Mucosa of descending colon (tissue), 3 donors: ENCODE measurements at regions of chr2 and their contacts with region 1.

Region 1: GRCh38 chr2:109128048-109128465 is 948 bp upstream of the SH3RF3 start:
- DNase-seq: peak; percentile 61 to 75 (median 74)
- ATAC-seq: peak; percentile 77
- H3K4me3 ChIP-seq: no peak overlapping the region
- H3K4me1 ChIP-seq: peaks cover 15% of the 10 kb centered on the region
- CTCF ChIP-seq: peak; percentile 74

Region 2: DNA sequence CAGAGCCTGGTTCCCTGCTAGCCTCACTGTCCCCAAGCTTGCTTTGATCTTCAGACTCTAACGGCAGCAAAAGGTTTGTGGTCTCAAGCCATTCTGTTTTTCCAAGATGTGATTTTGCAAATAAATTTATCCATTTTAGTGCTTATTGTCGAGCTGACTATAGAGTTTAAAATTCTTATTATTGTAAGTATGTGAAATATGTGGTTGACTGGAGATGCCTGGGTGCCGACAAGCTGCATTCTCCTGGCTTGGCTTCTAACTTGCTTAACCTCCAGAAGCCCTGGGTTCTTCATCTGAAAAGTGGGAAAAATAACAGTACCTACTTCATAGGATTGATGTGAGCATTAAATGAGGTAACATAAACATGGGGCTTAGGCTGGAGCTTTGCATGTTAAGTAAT is 129.1 kb before region 1 on chr2:
- intact Hi-C with region 1: no loop called
- DNase-seq: no peak
- ATAC-seq: no peak
- H3K4me3 ChIP-seq: no peak overlapping the region
- H3K4me1 ChIP-seq: no peaks in the 10 kb centered on the region
- CTCF ChIP-seq: no peak

Region 3: DNA sequence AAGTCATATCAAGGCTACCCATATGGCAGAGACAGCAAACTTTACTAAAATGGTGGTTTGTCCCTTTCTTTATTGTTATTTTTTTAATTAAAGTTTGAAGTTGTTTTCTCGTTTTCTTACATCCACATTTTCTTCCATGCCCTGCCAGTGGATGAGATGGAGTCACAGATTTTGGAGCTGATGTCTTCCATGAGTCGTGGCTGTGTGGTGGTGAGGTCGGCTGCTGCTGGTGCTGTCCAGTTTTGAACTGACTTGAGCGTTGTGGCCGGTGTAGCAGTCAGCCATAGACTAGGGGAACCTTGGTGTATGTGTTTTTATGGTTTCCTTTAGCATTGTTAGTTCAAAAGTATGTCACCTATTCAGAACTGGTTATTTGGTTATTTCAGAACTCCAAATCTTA is 183.7 kb after region 1 on chr2:
- intact Hi-C with region 1: no loop called
- DNase-seq: no peak
- ATAC-seq: no peak
- H3K4me3 ChIP-seq: no peak overlapping the region
- H3K4me1 ChIP-seq: no peaks in the 10 kb centered on the region
- CTCF ChIP-seq: no peak

Region 4: GRCh38 chr2:109322111-109322510 is 194.1 kb after region 1 on chr2:
- intact Hi-C with region 1: loop called in 1 of 2 experiments (anchors 10 kb)
- DNase-seq: peak; percentile 64 to 79 (median 69)
- ATAC-seq: peak; percentile 63
- H3K4me3 ChIP-seq: no peak overlapping the region
- H3K4me1 ChIP-seq: peaks cover 15% of the 10 kb centered on the region
- CTCF ChIP-seq: no peak

Region 5: DNA sequence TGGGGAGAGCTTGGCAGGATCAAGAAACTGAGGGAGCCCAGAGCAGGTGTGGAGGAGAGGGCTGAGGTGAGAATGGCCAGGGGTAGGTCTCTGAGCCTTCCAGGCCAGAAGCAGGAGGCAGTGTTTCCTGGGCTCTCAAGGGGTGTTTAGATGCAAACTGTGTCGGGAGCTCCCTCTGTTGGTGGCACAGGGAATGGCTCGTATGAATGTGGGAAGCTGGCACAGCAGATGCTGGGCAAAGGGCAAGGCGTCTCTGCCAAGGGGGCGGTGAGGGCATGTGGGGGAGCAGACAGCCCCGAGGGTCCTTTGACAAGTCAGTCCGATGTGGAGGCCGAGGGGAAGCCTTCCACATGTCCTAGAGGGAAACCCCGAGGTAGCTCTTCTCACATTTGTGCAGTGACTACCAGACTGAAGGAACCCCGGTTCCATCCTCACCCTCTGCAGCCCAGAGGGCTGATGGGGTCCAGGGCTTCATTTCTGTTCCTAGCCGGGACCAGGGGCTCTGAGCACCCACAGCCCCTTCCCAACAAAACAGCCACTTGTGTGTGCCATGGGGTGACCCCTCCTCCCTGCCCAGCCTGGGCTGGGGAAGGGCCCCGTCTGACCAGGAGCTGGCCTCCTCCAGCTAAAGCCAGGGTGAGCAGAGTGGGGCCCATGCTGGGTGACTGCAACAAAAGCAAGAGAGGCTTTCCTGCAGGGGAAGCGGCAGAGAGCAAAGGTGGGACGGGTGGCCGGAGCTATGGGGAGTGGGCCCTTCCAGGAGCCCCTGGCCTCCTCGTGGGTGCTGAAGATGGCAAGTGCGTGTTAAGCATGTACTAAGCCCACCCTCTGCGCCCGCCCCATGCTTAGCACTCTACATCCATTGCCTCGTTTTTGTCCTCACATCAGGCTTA is 382.3 kb after region 1 on chr2:
- intact Hi-C with region 1: loop called (anchors 2 to 10 kb)
- DNase-seq: peak; percentile 68 to 92 (median 83)
- ATAC-seq: peak; percentile 85
- H3K4me3 ChIP-seq: no peak overlapping the region
- H3K4me1 ChIP-seq: no peaks in the 10 kb centered on the region
- CTCF ChIP-seq: peak; percentile 91